ENCODE measurements at regions of chr3 and their contacts with region 1.

Region 1: GRCh38 chr3:156816800-156817645 is 9.1 kb upstream of the LEKR1 start:
- DNase-seq: no peak
- ATAC-seq: peak; percentile 34
- H3K4me3 ChIP-seq: peak overlapping the region in 1 of 3 experiments; percentile 17; a peak in 1 of 6 replicates
- H3K27ac ChIP-seq: no peak overlapping the region
- H3K4me1 ChIP-seq: peaks cover 24% of the 10 kb centered on the region
- H3K27me3 ChIP-seq: no peaks in the 10 kb centered on the region
- CTCF ChIP-seq: no peak
- EP300 ChIP-seq: no peak
- POLR2A ChIP-seq: no peak
- RAD21 ChIP-seq: no peak

Region 2: GRCh38 chr3:156891665-156892064 is 74.6 kb after region 1 on chr3:
- CTCF ChIA-PET with region 1: no interaction called
- POLR2A ChIA-PET with region 1: no interaction called
- in situ Hi-C with region 1: no loop called
- intact Hi-C with region 1: no loop called
- DNase-seq: peak; percentile 3
- ATAC-seq: no peak
- H3K4me3 ChIP-seq: no peak overlapping the region
- H3K27ac ChIP-seq: no peak overlapping the region
- H3K4me1 ChIP-seq: peaks cover 6% of the 10 kb centered on the region; the same call in 1 of the 2 replicates
- H3K27me3 ChIP-seq: no peaks in the 10 kb centered on the region
- CTCF ChIP-seq: no peak
- EP300 ChIP-seq: no peak
- POLR2A ChIP-seq: no peak
- RAD21 ChIP-seq: no peak

Region 3: DNA sequence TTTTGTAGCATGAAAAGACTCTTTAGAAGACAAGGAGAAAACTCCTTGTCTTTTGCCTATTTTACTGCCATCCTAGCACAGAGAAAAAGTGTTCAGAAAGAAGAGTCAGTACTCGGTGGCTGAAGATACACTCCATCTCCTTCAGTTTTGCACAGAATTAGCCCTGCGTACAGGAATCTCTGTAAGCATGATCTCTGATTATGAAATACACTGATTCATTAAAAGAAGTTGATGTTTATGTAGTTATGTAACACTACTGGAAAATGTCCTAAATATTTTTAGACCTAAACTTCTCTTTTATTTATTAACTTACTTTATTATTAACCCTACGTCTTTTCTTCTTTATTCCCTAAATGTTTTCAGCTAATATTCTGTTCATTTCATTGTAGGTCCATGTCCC is 147.6 kb after region 1 on chr3:
- CTCF ChIA-PET with region 1: no interaction called
- POLR2A ChIA-PET with region 1: no interaction called
- in situ Hi-C with region 1: no loop called
- intact Hi-C with region 1: no loop called
- DNase-seq: no peak
- ATAC-seq: no peak
- H3K4me3 ChIP-seq: no peak overlapping the region
- H3K27ac ChIP-seq: no peak overlapping the region
- H3K4me1 ChIP-seq: no peaks in the 10 kb centered on the region
- H3K27me3 ChIP-seq: no peaks in the 10 kb centered on the region
- CTCF ChIP-seq: no peak
- EP300 ChIP-seq: no peak
- POLR2A ChIP-seq: no peak
- RAD21 ChIP-seq: no peak

Region 4: DNA sequence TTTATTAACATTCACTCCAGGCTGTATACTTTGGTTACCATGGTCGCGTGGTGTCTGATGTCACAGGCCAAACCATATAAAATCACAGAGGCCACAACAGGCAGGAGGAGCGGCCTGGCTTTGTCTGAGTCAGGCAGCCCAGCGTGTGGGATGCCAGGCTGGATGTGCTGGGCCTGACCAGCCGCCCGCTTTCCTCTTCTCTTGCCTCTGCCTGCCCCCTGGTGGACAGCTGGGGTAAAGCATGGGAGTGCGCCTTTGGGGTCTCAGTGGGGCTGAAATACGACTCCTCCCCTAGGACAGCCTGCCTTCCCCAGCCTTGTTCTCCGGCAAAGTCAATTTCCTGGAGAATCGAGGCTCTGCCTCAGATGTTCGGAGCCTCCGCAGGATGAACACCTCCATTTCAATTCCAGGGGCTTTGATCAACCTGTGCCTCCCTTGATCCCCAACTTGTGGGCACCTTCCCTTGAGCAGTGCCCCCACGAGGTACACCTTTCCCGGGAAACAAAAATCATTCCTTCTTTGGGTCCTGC is 264.7 kb after region 1 on chr3:
- CTCF ChIA-PET with region 1: no interaction called
- POLR2A ChIA-PET with region 1: no interaction called
- in situ Hi-C with region 1: no loop called
- intact Hi-C with region 1: loop called (anchors 10 kb)
- DNase-seq: peak; percentile 68
- ATAC-seq: peak; percentile 83
- H3K4me3 ChIP-seq: peak overlapping the region in 1 of 3 experiments; percentile 36; a peak in 1 of 6 replicates
- H3K27ac ChIP-seq: no peak overlapping the region
- H3K4me1 ChIP-seq: peaks cover 27% of the 10 kb centered on the region
- H3K27me3 ChIP-seq: no peaks in the 10 kb centered on the region
- CTCF ChIP-seq: peak; percentile 97
- EP300 ChIP-seq: no peak; a peak in 1 of 4 replicates
- POLR2A ChIP-seq: no peak
- RAD21 ChIP-seq: peak; percentile 96